CD14-positive monocyte (primary cell): ENCODE measurements at regions of chr6 and their contacts with region 1.

Region 1: DNA sequence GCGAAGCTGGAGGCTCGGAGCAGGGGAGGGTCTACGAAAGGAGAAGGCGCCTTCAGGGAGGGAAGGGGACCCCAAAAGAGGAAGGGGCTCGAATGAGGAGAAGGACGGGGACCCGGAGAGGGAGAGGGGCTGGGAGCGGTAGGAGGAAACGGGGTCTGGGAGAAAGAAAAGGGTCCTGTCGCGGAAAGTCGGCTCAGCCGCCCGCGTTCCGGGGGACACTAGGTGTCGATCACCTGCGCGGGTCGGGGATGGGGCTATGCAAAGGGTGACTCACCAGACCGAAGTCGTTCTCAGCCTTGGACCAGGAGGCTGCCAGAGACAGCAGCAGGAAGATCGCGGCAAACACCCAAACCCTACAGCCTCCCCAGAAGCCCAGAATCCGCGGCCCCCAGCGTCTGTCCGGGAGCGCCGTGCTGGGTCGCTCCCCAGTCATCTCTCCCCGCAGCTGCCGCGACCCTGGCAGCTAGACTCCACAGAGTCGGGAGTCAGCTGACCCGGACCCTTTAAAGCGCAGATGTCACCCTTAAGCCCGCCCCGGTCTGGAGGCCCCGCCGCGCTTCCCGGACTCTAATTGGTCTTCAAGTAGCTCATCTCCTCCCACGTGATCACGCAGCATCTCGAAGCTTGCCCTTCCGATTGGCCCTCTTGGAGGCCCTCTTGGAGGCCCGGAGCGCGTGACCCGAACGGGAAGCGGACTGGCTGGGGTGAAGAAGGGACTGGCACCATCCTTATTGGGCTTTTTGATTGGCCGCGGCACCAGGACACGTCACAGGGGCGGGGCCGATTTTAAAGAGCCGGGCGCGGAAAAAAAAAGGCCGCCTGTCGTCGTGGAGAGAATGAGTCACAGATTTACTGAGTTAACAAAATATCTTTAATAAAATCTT is at the start of gene NEU1:
- DNase-seq: peak; percentile 100
- H3K4me3 ChIP-seq: peak within 1 kb of the TSS; percentile 69 to 97 (median 85)
- H3K4me3 Mint-ChIP-seq: peak within 1 kb of the TSS; percentile 94 to 98
- H3K27ac ChIP-seq: peak within 1 kb of the TSS; percentile 72 to 89
- H3K27ac Mint-ChIP-seq: peak within 1 kb of the TSS; percentile 93 to 98 (median 96)
- H3K4me1 ChIP-seq: peaks cover 22 to 28% of the 10 kb centered on the region in 2 donors
- H3K4me1 Mint-ChIP-seq: peaks cover 23% of the 10 kb centered on the region
- H3K27me3 ChIP-seq: no peaks in the 10 kb centered on the region
- H3K27me3 Mint-ChIP-seq: peaks cover 0 to 2% (median 2%) of the 10 kb centered on the region in 3 donors
- CTCF ChIP-seq: no peak
- polyA plus RNA-seq, gene NEU1: 70.2 to 89.5 (median 81.8) TPM

Region 2: DNA sequence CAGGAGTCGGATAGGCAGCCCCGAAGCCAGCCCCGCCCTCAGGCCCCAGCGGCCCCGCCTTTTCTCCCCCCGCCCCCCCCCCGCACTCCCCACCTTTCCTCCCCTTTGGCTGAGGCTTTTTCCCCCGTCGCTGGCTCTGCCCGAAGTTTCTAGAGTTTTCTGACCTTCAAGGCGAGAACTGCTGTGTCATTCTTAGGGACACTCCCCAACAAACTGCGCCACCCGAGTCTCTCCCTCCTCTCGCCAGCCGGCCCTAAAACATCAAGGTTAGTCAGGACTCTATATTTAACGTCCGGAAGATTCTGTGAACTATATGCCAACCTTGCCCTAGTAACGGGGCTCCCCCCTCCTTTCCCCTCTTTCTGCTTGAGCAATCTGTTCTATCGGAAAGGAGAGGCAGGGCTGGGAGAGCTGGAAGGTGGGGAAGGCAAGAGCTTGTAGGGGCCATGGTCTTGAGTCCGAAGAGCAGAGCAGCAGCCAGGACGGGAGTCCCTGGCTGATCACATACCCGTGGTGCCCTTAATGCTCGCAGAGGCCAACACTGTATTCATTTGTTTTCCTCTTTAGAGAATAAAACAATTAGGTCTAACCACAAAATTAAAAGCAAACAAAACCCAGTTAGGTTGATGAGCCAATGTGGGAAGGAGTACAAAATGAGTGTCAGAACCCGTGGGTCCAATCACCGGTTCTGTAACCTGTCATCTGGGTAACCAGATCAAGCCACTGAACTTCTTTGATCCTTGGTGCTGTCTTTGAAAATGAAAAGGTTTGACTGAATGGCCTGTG is 40.4 kb before region 1 on chr6:
- intact Hi-C with region 1: no loop called
- DNase-seq: peak; percentile 68 to 89 (median 76)
- H3K4me3 ChIP-seq: peak overlapping the region; percentile 56 to 93 (median 72)
- H3K4me3 Mint-ChIP-seq: peak overlapping the region; percentile 87 to 92
- H3K27ac ChIP-seq: peak overlapping the region; percentile 69 to 76
- H3K27ac Mint-ChIP-seq: peak overlapping the region; percentile 91 to 97 (median 94)
- H3K4me1 ChIP-seq: peaks cover 73 to 92% of the 10 kb centered on the region in 2 donors
- H3K4me1 Mint-ChIP-seq: peaks cover 78% of the 10 kb centered on the region
- H3K27me3 ChIP-seq: no peaks in the 10 kb centered on the region
- H3K27me3 Mint-ChIP-seq: peaks cover 0 to 4% (median 0%) of the 10 kb centered on the region in 3 donors
- CTCF ChIP-seq: no peak

Region 3: GRCh38 chr6:31834434-31835198 is 28.0 kb before region 1 on chr6:
- intact Hi-C with region 1: loop called in 1 of 2 experiments (anchors 2 kb)
- DNase-seq: peak; percentile 75 to 81 (median 77)
- H3K4me3 ChIP-seq: peak overlapping the region; percentile 83 to 89 (median 86)
- H3K4me3 Mint-ChIP-seq: peak overlapping the region; percentile 98 to 99
- H3K27ac ChIP-seq: peak overlapping the region; percentile 87 to 92
- H3K27ac Mint-ChIP-seq: peak overlapping the region; percentile 97 to 100 (median 98)
- H3K4me1 ChIP-seq: peaks cover 70 to 82% of the 10 kb centered on the region in 2 donors
- H3K4me1 Mint-ChIP-seq: peaks cover 56% of the 10 kb centered on the region
- H3K27me3 ChIP-seq: no peaks in the 10 kb centered on the region
- H3K27me3 Mint-ChIP-seq: no peaks in the 10 kb centered on the region
- CTCF ChIP-seq: no peak

Region 4: DNA sequence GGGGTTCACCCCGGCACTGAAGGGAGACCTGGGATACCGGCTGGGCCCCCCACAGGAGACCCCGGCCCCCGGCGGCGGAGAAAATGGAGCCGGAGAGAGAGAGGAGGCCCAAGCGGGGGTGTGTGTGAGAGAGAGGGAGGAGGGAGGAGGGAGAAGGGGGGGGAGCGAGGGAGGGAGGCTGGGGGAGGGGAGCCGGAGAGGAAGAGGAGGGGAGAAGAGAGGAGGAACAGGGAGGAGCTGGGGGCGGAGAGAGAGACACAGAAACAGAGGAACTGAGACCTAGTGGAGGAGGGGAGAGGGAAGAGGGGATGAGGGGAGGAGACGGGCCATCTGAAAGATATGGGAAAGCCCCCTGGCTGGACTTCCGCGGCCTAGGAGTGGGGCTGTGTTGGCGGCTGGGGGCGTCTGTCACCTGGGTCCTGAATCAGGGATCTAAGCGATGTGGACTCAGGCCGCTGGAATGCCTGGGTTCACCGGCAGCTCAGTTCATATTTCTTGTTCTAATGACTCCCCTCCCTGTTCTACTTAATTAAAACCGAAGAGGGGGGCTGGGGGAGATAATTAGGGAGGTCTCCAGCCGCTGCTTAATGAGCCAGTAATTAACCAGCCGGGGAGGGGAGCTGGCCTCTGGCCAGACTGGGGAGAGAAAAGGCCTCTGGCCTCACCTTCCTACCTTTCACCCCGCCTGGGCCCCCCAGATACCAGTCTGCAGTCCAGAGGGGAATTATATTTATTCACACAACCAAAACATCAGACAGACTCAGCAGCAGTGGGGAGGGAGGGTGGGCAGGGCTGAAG is 327.7 kb after region 1 on chr6 and contains the start of gene PBX2:
- intact Hi-C with region 1: no loop called
- DNase-seq: peak; percentile 91 to 94 (median 92)
- H3K4me3 ChIP-seq: peak within 1 kb of the TSS; percentile 74 to 98 (median 81)
- H3K4me3 Mint-ChIP-seq: peak within 1 kb of the TSS; percentile 96 to 98
- H3K27ac ChIP-seq: peak within 1 kb of the TSS; percentile 89 to 95
- H3K27ac Mint-ChIP-seq: peak within 1 kb of the TSS; percentile 96 to 99 (median 98)
- H3K4me1 ChIP-seq: peaks cover 73 to 82% of the 10 kb centered on the region in 2 donors
- H3K4me1 Mint-ChIP-seq: peaks cover 77% of the 10 kb centered on the region
- H3K27me3 ChIP-seq: no peaks in the 10 kb centered on the region
- H3K27me3 Mint-ChIP-seq: peaks cover 0 to 3% (median 2%) of the 10 kb centered on the region in 3 donors
- CTCF ChIP-seq: no peak
- polyA plus RNA-seq, gene PBX2: 1.9 to 201 (median 4.0) TPM